Cardiac septum (tissue), 1 donor: ENCODE measurements at regions of chr16 and their contacts with region 1.

Region 1: GRCh38 chr16:30534368-30535105 is at the start of gene ZNF747:
- DNase-seq: peak; percentile 97
- total RNA-seq, gene ZNF747: 13.7 TPM

Region 2: GRCh38 chr16:30429678-30430427 is 104.7 kb before region 1 on chr16 and contains the start of gene DCTPP1:
- intact Hi-C with region 1: loop called (anchors 5 kb)
- DNase-seq: peak; percentile 95
- total RNA-seq, gene DCTPP1: 23.1 TPM

Region 3: GRCh38 chr16:30557957-30558788 is 23.6 kb after region 1 on chr16 and contains the start of gene ZNF764:
- intact Hi-C with region 1: loop called (anchors 1 kb)
- DNase-seq: peak; percentile 100
- total RNA-seq, gene ZNF764: 11.4 TPM

Region 4: GRCh38 chr16:30585400-30586189 is 51.1 kb after region 1 on chr16 and contains the start of gene ZNF785:
- intact Hi-C with region 1: loop called (anchors 2 kb)
- DNase-seq: peak; percentile 98
- total RNA-seq, gene ZNF785: 6.7 TPM

Region 5: DNA sequence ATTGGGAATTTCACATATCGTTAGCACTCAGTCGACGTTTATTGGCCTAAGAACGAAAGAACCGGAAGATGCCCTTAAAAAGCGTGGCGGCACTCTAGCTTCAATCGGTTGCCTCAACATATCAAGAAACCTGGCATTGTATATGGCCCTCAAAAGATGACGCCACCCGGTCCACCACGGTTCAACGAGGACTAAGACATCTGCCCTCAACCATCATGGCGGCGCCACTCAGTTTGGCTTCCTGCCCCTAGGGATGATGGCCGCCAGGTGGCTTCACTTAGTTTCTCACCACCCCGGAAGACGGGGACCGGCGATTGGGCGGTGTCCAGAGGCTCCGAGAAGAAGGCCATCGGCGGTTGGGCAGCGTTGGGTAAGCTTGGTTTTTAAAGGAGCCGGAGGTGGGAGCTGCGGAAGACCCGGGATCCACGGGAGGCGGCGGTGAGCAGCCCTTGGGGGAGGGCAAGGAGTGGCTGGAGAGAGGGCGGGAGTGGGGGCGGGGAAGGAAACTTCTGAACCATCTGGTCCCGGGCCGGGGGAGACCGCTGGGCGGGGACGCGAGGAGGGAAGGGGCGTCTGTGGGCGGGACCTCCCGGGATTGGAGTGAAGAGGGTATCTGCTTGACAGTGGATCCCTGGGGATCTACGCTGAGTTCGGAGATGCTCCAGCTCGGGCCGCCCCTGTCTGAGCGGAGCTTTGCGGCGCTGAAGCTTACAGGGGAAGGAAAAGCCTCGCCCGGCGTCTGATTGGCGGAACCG is 116.0 kb after region 1 on chr16 and contains the start of gene PRR14:
- intact Hi-C with region 1: loop called (anchors 1 kb)
- DNase-seq: peak; percentile 100
- total RNA-seq, gene PRR14: 21.1 TPM